Activated naive CD4-positive, alpha-beta T cell treated with anti-CD3 and anti-CD28 coated beads for 36 hours (primary cell): ENCODE measurements at regions of chr3 and their contacts with region 1.

Region 1: GRCh38 chr3:172153335-172153861 is 114.0 kb downstream of the FNDC3B start:
- DNase-seq: peak; percentile 72
- H3K4me3 Mint-ChIP-seq: peak overlapping the region; percentile 13
- H3K27ac Mint-ChIP-seq: no peak overlapping the region
- H3K4me1 Mint-ChIP-seq: peaks cover 31% of the 10 kb centered on the region
- H3K27me3 Mint-ChIP-seq: no peaks in the 10 kb centered on the region

Region 2: DNA sequence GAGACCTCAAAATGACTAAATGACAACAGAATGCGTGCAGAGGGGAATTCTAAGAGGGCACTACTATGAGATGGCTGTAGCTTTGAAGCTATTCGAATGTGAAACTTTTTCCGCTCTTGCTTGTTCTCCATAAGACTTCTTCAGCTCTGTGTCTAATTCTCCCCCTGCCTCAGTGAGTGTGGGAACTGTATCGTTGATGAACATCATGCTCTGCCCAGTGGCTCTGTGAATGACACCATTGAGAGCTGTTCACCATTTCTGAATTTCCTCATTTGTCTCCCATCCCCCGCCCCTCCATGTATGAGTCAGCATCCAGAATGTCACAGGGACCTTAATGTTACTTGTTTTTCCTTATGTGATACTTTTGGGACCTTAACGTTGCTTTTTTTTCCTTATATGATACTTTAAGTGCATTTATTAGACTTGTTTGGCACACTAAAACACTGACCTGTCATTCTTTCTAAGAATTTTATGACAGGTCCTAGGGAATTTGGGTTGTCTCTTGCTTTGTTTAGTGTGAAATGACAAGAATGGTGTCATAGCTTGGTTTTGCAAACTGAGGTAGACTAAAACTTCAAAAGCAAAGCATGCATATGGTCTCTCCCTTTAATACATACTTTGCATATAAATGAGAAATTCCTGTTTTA is 14.5 kb before region 1 on chr3:
- CTCF ChIA-PET with region 1: no interaction called
- intact Hi-C with region 1: loop called (anchors 1 kb)
- DNase-seq: peak; percentile 62
- H3K4me3 Mint-ChIP-seq: no peak overlapping the region
- H3K27ac Mint-ChIP-seq: no peak overlapping the region
- H3K4me1 Mint-ChIP-seq: peaks cover 38% of the 10 kb centered on the region
- H3K27me3 Mint-ChIP-seq: no peaks in the 10 kb centered on the region